Activated CD4-positive, alpha-beta T cell treated with anti-CD3 and anti-CD28 coated beads, Interleukin-2, amount 10 ng/mL, durations not matched to agents 24 days and 14 days (primary cell): ENCODE measurements at regions of chr11 and their contacts with region 1.

Region 1: GRCh38 chr11:6389921-6390724 is at the start of gene SMPD1:
- DNase-seq: peak; percentile 97
- H3K4me3 Mint-ChIP-seq: peak within 1 kb of the TSS; percentile 85
- H3K27ac Mint-ChIP-seq: peak within 1 kb of the TSS; percentile 94
- H3K4me1 Mint-ChIP-seq: peaks cover 36% of the 10 kb centered on the region
- H3K27me3 Mint-ChIP-seq: no peaks in the 10 kb centered on the region
- total RNA-seq, gene SMPD1: 9.4 and 10.0 TPM in 2 replicates

Region 2: GRCh38 chr11:6127881-6128280 is 262.2 kb before region 1 on chr11:
- intact Hi-C with region 1: no loop called
- DNase-seq: no peak
- H3K4me3 Mint-ChIP-seq: no peak overlapping the region
- H3K27ac Mint-ChIP-seq: no peak overlapping the region
- H3K4me1 Mint-ChIP-seq: no peaks in the 10 kb centered on the region
- H3K27me3 Mint-ChIP-seq: peaks cover 4% of the 10 kb centered on the region

Region 3: DNA sequence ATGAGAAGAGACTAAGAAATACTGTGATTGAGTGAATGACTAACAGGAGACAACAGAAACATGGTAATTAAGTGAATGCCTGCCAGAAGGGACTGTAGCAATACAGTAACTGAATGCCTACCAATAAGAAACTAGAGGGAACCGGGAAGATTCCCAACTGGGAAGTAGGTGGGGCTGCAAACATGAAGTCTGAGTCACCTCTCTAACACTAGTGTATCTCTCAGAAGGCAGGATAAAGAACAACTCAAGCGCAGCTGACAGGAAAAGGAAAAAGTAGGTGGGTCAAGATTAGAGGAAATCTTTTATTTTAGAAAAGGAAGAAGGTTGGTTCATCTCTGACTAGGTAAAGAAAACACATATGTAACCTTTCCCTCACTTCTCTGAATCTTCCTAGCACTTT is 170.8 kb before region 1 on chr11:
- intact Hi-C with region 1: no loop called
- DNase-seq: no peak
- H3K4me3 Mint-ChIP-seq: no peak overlapping the region
- H3K27ac Mint-ChIP-seq: no peak overlapping the region
- H3K4me1 Mint-ChIP-seq: peaks cover 16% of the 10 kb centered on the region
- H3K27me3 Mint-ChIP-seq: no peaks in the 10 kb centered on the region

Region 4: DNA sequence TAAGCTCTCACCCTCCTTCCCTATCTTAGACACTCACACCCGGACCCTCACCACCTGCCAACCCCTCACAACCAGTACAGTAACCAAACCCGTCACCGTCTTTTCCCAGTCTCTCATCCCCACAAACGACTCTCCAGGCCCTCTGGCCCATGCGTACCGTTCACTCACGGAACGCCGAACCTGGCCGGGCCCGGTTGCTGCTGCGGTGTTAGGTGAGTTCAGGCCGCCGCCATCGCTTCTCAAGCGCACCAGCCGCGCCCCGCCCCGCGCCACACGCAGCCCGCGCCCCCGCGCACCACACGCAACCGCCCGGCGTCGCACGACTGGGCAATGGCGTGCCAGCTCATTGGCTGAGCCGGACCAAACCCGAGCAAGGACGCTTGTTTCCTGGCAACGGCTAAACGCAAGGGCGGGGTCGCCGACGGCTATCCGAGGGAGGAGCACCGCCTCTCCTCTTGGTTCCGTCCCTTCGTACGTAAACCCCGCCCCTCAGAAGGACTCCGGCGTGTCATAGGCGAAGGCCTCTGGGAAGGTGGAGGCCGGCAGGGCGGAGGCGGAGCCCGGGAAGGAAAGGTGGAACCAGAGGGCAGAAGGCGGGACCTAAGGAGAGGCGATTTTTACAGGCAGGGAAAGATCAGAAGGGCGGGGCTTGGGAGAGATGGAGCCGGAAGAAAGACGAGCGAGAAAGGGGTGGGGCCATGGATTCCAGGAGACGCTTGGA is 155.6 kb before region 1 on chr11 and contains the start of gene FHIP1B:
- intact Hi-C with region 1: loop called (anchors 1 kb)
- DNase-seq: peak; percentile 100
- H3K4me3 Mint-ChIP-seq: peak within 1 kb of the TSS; percentile 95
- H3K27ac Mint-ChIP-seq: peak within 1 kb of the TSS; percentile 90
- H3K4me1 Mint-ChIP-seq: peaks cover 35% of the 10 kb centered on the region
- H3K27me3 Mint-ChIP-seq: peaks cover 1% of the 10 kb centered on the region
- total RNA-seq, gene FHIP1B: 19.3 and 20.2 TPM in 2 replicates

Region 5: DNA sequence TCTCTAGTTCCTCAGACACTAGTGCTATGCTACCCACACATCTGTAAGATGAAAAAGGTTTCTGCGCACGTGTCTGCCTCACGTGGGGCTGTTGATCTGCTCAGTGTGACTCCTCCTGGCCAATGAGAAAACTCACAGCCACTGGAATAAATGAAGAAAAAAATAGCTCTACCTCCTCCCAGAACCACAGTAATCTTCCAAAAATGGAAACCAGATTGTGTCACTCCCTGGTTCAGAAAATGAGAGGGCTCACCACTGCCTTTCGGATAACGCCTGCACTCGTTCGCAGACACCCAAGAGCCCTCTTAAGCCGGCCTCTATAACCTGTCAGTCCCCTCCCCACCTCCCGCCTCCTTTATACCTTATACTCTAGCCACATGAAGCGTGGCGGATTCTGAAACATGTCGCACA is 23.7 kb after region 1 on chr11:
- intact Hi-C with region 1: loop called (anchors 1 kb)
- DNase-seq: peak; percentile 82
- H3K4me3 Mint-ChIP-seq: no peak overlapping the region
- H3K27ac Mint-ChIP-seq: no peak overlapping the region
- H3K4me1 Mint-ChIP-seq: peaks cover 11% of the 10 kb centered on the region
- H3K27me3 Mint-ChIP-seq: no peaks in the 10 kb centered on the region

Region 6: GRCh38 chr11:6443269-6444003 is 53.3 kb after region 1 on chr11:
- intact Hi-C with region 1: loop called (anchors 2 kb)
- DNase-seq: peak; percentile 87
- H3K4me3 Mint-ChIP-seq: no peak overlapping the region
- H3K27ac Mint-ChIP-seq: no peak overlapping the region
- H3K4me1 Mint-ChIP-seq: no peaks in the 10 kb centered on the region
- H3K27me3 Mint-ChIP-seq: peaks cover 11% of the 10 kb centered on the region

Region 7: GRCh38 chr11:6544921-6545850 is 155.1 kb after region 1 on chr11:
- intact Hi-C with region 1: no loop called
- DNase-seq: no peak
- H3K4me3 Mint-ChIP-seq: no peak overlapping the region
- H3K27ac Mint-ChIP-seq: no peak overlapping the region
- H3K4me1 Mint-ChIP-seq: peaks cover 14% of the 10 kb centered on the region
- H3K27me3 Mint-ChIP-seq: no peaks in the 10 kb centered on the region

Region 8: GRCh38 chr11:6612213-6613041 is 222.3 kb after region 1 on chr11 and contains the start of gene TAF10:
- intact Hi-C with region 1: loop called (anchors 2 kb)
- DNase-seq: peak; percentile 99
- H3K4me3 Mint-ChIP-seq: peak within 1 kb of the TSS; percentile 95
- H3K27ac Mint-ChIP-seq: peak within 1 kb of the TSS; percentile 87
- H3K4me1 Mint-ChIP-seq: peaks cover 32% of the 10 kb centered on the region
- H3K27me3 Mint-ChIP-seq: no peaks in the 10 kb centered on the region
- total RNA-seq, gene TAF10: 140 and 141 TPM in 2 replicates